ENCODE measurements at regions of chr9 and their contacts with region 1.

Region 1: GRCh38 chr9:96441798-96442445 is 8.0 kb upstream of the HABP4 start:
- DNase-seq: peak; percentile 47
- CTCF ChIP-seq: peak; percentile 49

Region 2: DNA sequence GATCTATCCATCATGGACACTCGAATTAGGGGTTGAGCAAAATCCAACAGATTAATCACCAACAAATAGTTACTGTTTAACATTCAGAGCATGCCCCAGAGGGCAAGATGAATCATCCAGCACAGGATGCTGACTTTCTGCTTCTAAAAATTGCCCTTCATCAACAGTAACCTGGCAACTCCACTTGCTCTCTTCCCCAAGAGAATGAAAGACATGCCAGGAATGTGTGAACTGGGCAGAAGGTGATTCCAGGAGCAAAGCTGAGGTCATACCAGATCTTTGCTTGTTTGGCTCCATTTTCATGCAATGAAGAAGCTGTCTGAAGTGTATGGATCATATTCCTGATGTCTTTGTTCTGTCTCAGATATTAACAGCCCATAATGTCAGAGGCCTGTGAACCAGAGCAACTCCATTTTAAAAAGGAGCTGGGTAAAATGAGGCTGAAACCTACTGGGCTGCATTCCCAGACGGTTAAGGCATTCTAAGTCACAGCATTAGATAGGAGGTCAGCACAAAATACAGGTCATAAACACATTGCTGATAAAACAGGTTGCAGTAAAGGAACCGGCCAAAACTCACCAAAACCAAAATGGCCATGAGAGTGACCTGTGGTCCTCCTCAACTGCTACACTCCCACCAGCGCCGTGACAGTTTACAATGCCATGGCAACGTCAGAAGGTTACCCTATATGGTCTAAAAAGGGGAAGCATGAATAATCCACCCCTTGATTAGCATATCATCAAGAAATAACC is 21.3 kb before region 1 on chr9:
- CTCF ChIA-PET with region 1: interaction called, 28 read pairs
- POLR2A ChIA-PET with region 1: no interaction called
- DNase-seq: peak; percentile 36
- CTCF ChIP-seq: no peak

Region 3: GRCh38 chr9:96663506-96664120 is 221.7 kb after region 1 on chr9:
- CTCF ChIA-PET with region 1: interaction called, 19 read pairs
- POLR2A ChIA-PET with region 1: no interaction called
- DNase-seq: no peak
- CTCF ChIP-seq: no peak